ENCODE measurements at regions of chr12 and their contacts with region 1.

Region 1: GRCh38 chr12:98397316-98398105 is 117.9 kb upstream of the TMPO start:
- DNase-seq: peak; percentile 64 to 91
- H3K4me3 ChIP-seq: peak overlapping the region; percentile 24 to 59 (median 34); a peak in 7 of 8 replicates
- H3K27ac ChIP-seq: no peak overlapping the region
- H3K4me1 ChIP-seq: peaks cover 0 to 10% (median 7%) of the 10 kb centered on the region in 4 experiments; a peak in 5 of 7 replicates
- H3K27me3 ChIP-seq: no peaks in the 10 kb centered on the region
- CTCF ChIP-seq: peak; percentile 85 to 88 (median 86)
- EP300 ChIP-seq: no peak
- POLR2A ChIP-seq: no peak
- RAD21 ChIP-seq: peak; percentile 91 to 93

Region 2: DNA sequence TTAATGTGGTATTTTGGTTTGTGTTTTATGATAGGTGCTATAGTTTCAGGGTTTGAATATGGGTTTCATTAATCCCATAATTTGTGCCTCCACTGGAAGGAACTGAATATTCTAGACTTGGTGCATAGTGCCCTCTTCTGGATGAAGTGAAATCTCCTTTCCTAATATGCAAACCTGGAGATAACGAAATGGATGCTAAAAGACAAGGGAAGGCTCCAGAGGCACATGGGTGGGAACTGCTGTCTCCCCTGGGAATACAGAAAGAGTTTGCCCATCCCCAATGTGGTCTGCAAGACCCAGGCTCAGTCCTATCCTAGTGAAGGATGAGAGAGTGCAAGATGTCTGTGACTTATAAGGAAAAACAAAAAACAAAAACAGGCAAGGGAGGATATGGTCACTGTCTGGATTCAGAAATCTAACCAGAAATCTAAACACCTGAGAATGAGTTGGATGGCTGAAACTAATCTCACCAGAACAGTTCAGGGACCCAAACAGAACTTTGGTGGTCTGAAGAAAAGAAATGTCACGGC is 24.4 kb before region 1 on chr12:
- CTCF ChIA-PET with region 1: interaction called, 27 read pairs
- POLR2A ChIA-PET with region 1: no interaction called
- DNase-seq: no peak
- H3K4me3 ChIP-seq: no peak overlapping the region
- H3K27ac ChIP-seq: no peak overlapping the region
- H3K4me1 ChIP-seq: no peaks in the 10 kb centered on the region; a peak in 1 of 7 replicates
- H3K27me3 ChIP-seq: no peaks in the 10 kb centered on the region
- CTCF ChIP-seq: peak in 2 of 3 experiments; percentile 65 to 71; a peak in 3 of 4 replicates
- EP300 ChIP-seq: no peak
- POLR2A ChIP-seq: no peak
- RAD21 ChIP-seq: peak; percentile 89 to 92

Region 3: DNA sequence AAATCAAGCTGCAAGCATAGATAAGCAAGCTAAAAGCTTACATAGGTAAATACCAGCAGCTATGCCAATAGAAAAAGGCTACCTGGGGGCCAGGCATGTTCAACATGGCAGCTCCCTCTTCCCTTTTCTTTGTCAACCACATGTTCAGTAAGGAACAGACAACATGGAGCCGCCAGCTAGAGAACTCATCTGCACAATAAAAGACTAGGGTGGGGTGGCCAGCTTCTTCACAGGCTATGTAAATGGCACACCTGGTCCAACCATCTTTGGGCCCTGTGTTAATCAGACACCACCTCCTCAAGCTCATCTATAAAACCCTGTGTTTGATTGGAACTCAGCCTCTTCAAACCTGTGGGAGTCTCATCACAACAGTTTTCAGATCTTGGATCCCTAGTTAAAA is 11.9 kb before region 1 on chr12:
- CTCF ChIA-PET with region 1: interaction called, 12 read pairs
- POLR2A ChIA-PET with region 1: no interaction called
- DNase-seq: no peak
- H3K4me3 ChIP-seq: no peak overlapping the region
- H3K27ac ChIP-seq: no peak overlapping the region
- H3K4me1 ChIP-seq: no peaks in the 10 kb centered on the region; a peak in 1 of 7 replicates
- H3K27me3 ChIP-seq: no peaks in the 10 kb centered on the region
- CTCF ChIP-seq: no peak
- EP300 ChIP-seq: no peak
- POLR2A ChIP-seq: no peak
- RAD21 ChIP-seq: no peak

Region 4: DNA sequence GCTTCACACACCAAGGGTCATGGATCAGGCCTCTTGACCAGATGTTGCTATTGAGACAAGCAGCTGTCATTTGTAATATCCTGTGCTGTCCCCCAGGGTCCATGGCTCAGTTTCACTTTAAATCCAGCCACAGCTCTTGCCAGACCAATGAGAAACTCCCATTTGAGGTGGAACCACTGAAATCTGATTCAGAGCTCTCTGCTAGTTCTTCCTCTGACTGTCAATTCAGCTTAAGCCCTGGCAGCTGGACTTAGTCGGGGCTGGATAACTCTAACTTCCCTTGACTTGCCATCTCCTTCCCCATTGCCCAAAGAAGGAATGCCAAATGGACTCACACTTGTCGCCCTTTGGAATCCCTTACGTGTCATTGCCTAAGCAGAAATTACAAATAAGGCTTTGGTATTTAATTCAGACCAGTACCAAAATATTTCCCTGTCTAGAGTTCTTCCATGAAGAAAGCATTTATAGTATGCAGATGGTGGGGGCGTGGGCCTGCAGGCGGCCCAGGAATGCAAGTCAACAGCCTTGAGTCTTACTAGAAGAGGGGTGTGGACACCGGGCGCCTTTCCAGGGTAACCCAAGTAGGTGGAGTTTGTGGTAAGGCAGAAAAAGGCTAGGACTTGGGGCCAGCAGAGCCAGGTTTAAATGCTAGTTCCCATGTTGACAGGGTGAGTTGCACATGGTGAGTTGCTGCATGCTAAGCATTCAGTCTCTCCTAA is 21.0 kb after region 1 on chr12:
- CTCF ChIA-PET with region 1: interaction called, 11 read pairs
- POLR2A ChIA-PET with region 1: no interaction called
- DNase-seq: no peak
- H3K4me3 ChIP-seq: no peak overlapping the region
- H3K27ac ChIP-seq: no peak overlapping the region
- H3K4me1 ChIP-seq: peaks cover 0 to 4% (median 3%) of the 10 kb centered on the region in 4 experiments; a peak in 4 of 7 replicates
- H3K27me3 ChIP-seq: no peaks in the 10 kb centered on the region
- CTCF ChIP-seq: no peak
- EP300 ChIP-seq: no peak
- POLR2A ChIP-seq: no peak
- RAD21 ChIP-seq: no peak

Region 5: GRCh38 chr12:98516184-98516873 is 118.8 kb after region 1 on chr12:
- CTCF ChIA-PET with region 1: no interaction called
- POLR2A ChIA-PET with region 1: no interaction called
- DNase-seq: peak in 1 of 2 experiments; percentile 79
- H3K4me3 ChIP-seq: peak overlapping the region; percentile 95 to 98 (median 98)
- H3K27ac ChIP-seq: peak overlapping the region; percentile 99
- H3K4me1 ChIP-seq: no peaks in the 10 kb centered on the region; a peak in 2 of 7 replicates
- H3K27me3 ChIP-seq: no peaks in the 10 kb centered on the region
- CTCF ChIP-seq: peak; percentile 27 to 46 (median 42); a peak in 3 of 4 replicates
- EP300 ChIP-seq: no peak
- POLR2A ChIP-seq: peak in 1 of 2 experiments; percentile 70; a peak in 2 of 3 replicates
- RAD21 ChIP-seq: peak; percentile 58 to 63

Measured in H1 (cell line).